Mammary epithelial cell (primary cell): ENCODE measurements at regions of chr1 and their contacts with region 1.

Region 1: GRCh38 chr1:27234049-27234882 is at the start of gene WDTC1:
- DNase-seq: peak; percentile 96
- H3K4me3 ChIP-seq: peak within 1 kb of the TSS; percentile 68 to 72 (median 71)
- H3K27ac ChIP-seq: peak within 1 kb of the TSS; percentile 31
- H3K4me1 ChIP-seq: peaks cover 15% of the 10 kb centered on the region
- H3K27me3 ChIP-seq: no peaks in the 10 kb centered on the region
- CTCF ChIP-seq: no peak
- total RNA-seq, gene WDTC1: 29.4 to 39.8 TPM

Region 2: GRCh38 chr1:27117733-27118439 is 116.4 kb before region 1 on chr1:
- CTCF ChIA-PET with region 1: no interaction called
- dilution Hi-C with region 1: no loop called
- in situ Hi-C with region 1: no loop called
- intact Hi-C with region 1: no loop called
- DNase-seq: peak; percentile 69
- H3K4me3 ChIP-seq: no peak overlapping the region
- H3K27ac ChIP-seq: peak overlapping the region; percentile 19
- H3K4me1 ChIP-seq: peaks cover 46% of the 10 kb centered on the region
- H3K27me3 ChIP-seq: no peaks in the 10 kb centered on the region
- CTCF ChIP-seq: no peak

Region 3: GRCh38 chr1:27145934-27146354 is 88.3 kb before region 1 on chr1:
- CTCF ChIA-PET with region 1: no interaction called
- dilution Hi-C with region 1: no loop called
- in situ Hi-C with region 1: no loop called
- intact Hi-C with region 1: no loop called
- DNase-seq: peak; percentile 85
- H3K4me3 ChIP-seq: no peak overlapping the region
- H3K27ac ChIP-seq: peak overlapping the region; percentile 44
- H3K4me1 ChIP-seq: peaks cover 66% of the 10 kb centered on the region
- H3K27me3 ChIP-seq: no peaks in the 10 kb centered on the region
- CTCF ChIP-seq: no peak

Region 4: GRCh38 chr1:27166351-27166802 is 67.9 kb before region 1 on chr1:
- CTCF ChIA-PET with region 1: no interaction called
- dilution Hi-C with region 1: no loop called
- in situ Hi-C with region 1: no loop called
- intact Hi-C with region 1: loop called (anchors 2 kb)
- DNase-seq: peak; percentile 70
- H3K4me3 ChIP-seq: no peak overlapping the region
- H3K27ac ChIP-seq: no peak overlapping the region
- H3K4me1 ChIP-seq: peaks cover 9% of the 10 kb centered on the region
- H3K27me3 ChIP-seq: no peaks in the 10 kb centered on the region
- CTCF ChIP-seq: no peak